PC-9 (cell line): ENCODE measurements at regions of chr3 and their contacts with region 1.

Region 1: DNA sequence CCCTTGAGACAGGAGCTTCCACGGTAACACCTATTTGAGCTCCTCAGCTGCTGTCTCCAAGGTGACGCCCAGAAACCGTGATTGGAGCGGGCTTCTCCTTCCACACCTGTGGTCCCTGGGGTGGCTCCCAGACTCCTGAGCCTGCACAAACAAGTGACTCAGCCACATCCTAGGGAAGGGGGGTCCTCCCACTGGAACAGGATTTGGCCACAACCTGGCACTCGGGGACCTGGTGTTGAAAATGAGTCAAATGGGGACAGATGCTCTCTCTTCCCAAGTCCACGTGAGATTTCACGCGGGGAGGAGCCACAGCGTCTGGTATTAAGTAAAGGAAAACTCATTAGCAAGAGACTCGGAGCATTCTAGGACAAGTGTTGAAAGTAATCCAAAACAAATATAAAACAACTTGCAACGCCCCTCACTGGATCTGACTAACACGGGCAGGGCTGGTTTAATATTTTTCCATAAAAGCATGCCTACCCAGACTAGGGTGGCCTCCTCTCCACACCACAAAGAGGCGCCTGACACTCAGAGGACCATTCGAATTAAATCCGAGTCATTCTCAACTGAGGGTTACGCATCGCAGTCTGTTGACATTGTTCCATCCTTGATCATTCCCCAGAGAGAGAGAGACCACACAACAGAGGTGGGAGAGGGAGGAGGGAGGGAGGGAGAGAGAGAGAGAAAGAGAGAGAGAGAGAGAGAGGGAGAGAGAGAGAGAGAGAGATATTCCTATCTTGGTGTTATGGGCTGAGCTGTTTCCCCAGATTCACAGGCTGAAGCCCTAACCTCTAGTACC is 74.4 kb downstream of the MGLL start:
- DNase-seq: peak; percentile 95 to 97
- H3K4me3 ChIP-seq: 0 out of 2 replicates have a peak overlapping the region, but pooled peaks have one; percentile 6
- H3K27ac ChIP-seq: peak overlapping the region; percentile 91
- H3K4me1 ChIP-seq: peaks cover 73% of the 10 kb centered on the region
- H3K27me3 ChIP-seq: no peaks in the 10 kb centered on the region
- CTCF ChIP-seq: peak; percentile 69

Region 2: DNA sequence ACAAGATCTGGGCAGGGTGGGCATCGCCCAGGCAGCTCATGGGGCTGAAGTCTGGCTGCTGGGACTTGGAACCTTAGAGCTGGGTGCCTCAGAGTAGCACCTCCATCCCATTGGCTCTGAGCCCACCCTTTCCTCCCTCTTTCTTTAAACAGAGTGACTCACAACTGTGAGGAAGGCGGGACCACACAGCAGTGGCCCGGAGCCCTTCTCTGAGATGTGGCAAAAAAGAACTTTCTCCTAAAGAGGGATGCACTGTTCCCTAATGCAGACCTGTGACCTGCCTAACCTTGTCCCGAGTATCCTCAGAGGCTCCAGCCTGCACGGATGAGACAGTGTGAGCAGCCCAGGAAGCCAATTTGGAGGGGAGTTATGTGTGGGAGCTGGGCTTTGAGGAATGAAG is 483.6 kb before region 1 on chr3:
- CTCF ChIA-PET with region 1: no interaction called
- POLR2A ChIA-PET with region 1: no interaction called
- intact Hi-C with region 1: no loop called
- DNase-seq: no peak
- H3K4me3 ChIP-seq: no peak overlapping the region
- H3K27ac ChIP-seq: no peak overlapping the region
- H3K4me1 ChIP-seq: no peaks in the 10 kb centered on the region
- H3K27me3 ChIP-seq: peaks cover 8% of the 10 kb centered on the region
- CTCF ChIP-seq: no peak

Region 3: GRCh38 chr3:127652231-127652995 is 95.5 kb before region 1 on chr3:
- CTCF ChIA-PET with region 1: no interaction called
- POLR2A ChIA-PET with region 1: no interaction called
- intact Hi-C with region 1: loop called (anchors 1 kb)
- DNase-seq: peak in 1 of 2 experiments; percentile 57
- H3K4me3 ChIP-seq: no peak overlapping the region
- H3K27ac ChIP-seq: no peak overlapping the region
- H3K4me1 ChIP-seq: peaks cover 26% of the 10 kb centered on the region
- H3K27me3 ChIP-seq: no peaks in the 10 kb centered on the region
- CTCF ChIP-seq: peak; percentile 92

Region 4: GRCh38 chr3:127697551-127698240 is 50.2 kb before region 1 on chr3:
- CTCF ChIA-PET with region 1: interaction called, 5 read pairs
- POLR2A ChIA-PET with region 1: interaction called, 12 read pairs
- intact Hi-C with region 1: no loop called
- DNase-seq: peak in 1 of 2 experiments; percentile 44
- H3K4me3 ChIP-seq: no peak overlapping the region
- H3K27ac ChIP-seq: no peak overlapping the region
- H3K4me1 ChIP-seq: no peaks in the 10 kb centered on the region
- H3K27me3 ChIP-seq: no peaks in the 10 kb centered on the region
- CTCF ChIP-seq: no peak

Region 5: DNA sequence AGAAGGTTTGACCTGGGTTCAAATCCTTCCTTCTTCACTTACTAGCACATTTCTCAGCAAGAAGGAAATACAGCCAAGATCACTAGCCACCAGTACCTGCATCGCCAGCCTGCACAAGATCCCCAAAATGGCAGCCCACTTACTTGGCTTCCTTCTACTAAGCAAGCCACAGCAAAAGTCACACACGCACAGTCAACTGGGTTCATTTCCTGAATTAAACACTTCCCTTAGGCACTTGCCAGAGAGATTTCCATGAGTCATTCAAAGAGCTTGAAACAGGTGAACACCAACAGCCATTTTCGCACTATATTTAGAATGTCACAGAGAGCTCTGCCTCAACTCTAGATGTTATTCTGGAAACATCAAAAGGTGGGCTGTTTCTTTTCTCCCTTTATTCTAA is 31.8 kb after region 1 on chr3:
- CTCF ChIA-PET with region 1: no interaction called
- POLR2A ChIA-PET with region 1: no interaction called
- intact Hi-C with region 1: loop called (anchors 1 kb)
- DNase-seq: peak; percentile 31 to 80
- H3K4me3 ChIP-seq: no peak overlapping the region
- H3K27ac ChIP-seq: peak overlapping the region; percentile 48
- H3K4me1 ChIP-seq: peaks cover 29% of the 10 kb centered on the region
- H3K27me3 ChIP-seq: no peaks in the 10 kb centered on the region
- CTCF ChIP-seq: no peak

Region 6: DNA sequence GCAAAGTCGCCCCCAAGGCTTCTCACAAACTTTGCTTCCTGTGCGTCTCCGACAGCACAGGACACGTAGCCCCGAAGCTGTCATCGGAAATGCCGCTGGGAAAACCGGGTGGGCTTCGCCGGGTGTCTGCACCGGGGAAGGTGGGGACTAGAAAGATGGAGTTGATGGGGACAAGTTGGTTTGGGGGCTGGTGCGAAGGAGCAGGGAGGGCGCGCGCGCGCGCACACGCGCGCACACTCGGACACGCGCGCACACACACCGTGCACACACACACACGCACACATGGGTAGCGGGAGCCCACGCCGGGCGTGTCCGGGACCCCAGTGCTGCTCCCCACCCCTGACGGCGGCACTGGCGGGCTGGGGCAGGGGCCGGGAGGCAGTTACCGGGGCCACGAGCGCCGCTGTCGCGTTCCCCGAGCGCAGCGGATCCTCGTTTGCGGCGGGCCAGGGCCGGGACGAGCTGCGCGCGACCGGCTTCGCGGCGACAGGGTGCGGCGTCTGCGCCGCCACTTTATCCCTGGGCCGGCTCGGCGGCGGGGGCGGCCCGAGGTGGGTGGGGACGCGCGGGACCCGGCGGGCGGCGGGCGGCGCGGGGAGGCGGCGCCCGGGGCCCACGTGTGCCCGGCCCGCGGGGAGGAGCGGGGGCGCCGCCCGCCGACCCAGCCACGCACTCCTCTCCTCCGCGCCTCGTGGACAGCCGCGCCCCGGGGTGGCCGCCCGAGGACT is 74.9 kb after region 1 on chr3:
- CTCF ChIA-PET with region 1: no interaction called
- POLR2A ChIA-PET with region 1: interaction called, 7 read pairs
- intact Hi-C with region 1: loop called (anchors 1 kb)
- DNase-seq: peak in 1 of 2 experiments; percentile 49
- H3K4me3 ChIP-seq: peak overlapping the region; percentile 76
- H3K27ac ChIP-seq: peak overlapping the region; percentile 93
- H3K4me1 ChIP-seq: peaks cover 44% of the 10 kb centered on the region
- H3K27me3 ChIP-seq: no peaks in the 10 kb centered on the region
- CTCF ChIP-seq: no peak